ENCODE measurements at regions of chr22 and their contacts with region 1.

Region 1: GRCh38 chr22:37457093-37457893 is 28.9 kb downstream of the MFNG start:
- DNase-seq: peak; percentile 71 to 91 (median 82)
- H3K4me3 ChIP-seq: no peak overlapping the region
- H3K27ac ChIP-seq: no peak overlapping the region
- H3K4me1 ChIP-seq: peaks cover 0 to 9% of the 10 kb centered on the region in 2 donors
- H3K27me3 ChIP-seq: no peaks in the 10 kb centered on the region
- CTCF ChIP-seq: peak; percentile 83 to 95 (median 88)
- POLR2A ChIP-seq: no peak

Region 2: GRCh38 chr22:37260901-37261336 is 196.4 kb before region 1 on chr22:
- intact Hi-C with region 1: loop called in 1 of 2 experiments (anchors 5 kb)
- DNase-seq: peak; percentile 58 to 79 (median 68)
- H3K4me3 ChIP-seq: no peak overlapping the region
- H3K27ac ChIP-seq: no peak overlapping the region
- H3K4me1 ChIP-seq: no peaks in the 10 kb centered on the region
- H3K27me3 ChIP-seq: peaks cover 6% of the 10 kb centered on the region
- CTCF ChIP-seq: peak; percentile 75 to 91 (median 81)
- POLR2A ChIP-seq: no peak

Region 3: GRCh38 chr22:37273126-37273845 is 184.0 kb before region 1 on chr22:
- intact Hi-C with region 1: loop called in 1 of 2 experiments (anchors 5 kb)
- DNase-seq: no peak
- H3K4me3 ChIP-seq: no peak overlapping the region
- H3K27ac ChIP-seq: no peak overlapping the region
- H3K4me1 ChIP-seq: no peaks in the 10 kb centered on the region
- H3K27me3 ChIP-seq: no peaks in the 10 kb centered on the region
- CTCF ChIP-seq: no peak
- POLR2A ChIP-seq: no peak

Region 4: GRCh38 chr22:37316875-37317371 is 140.4 kb before region 1 on chr22:
- intact Hi-C with region 1: loop called (anchors 2 to 5 kb)
- DNase-seq: peak; percentile 81 to 90 (median 87)
- H3K4me3 ChIP-seq: no peak overlapping the region
- H3K27ac ChIP-seq: no peak overlapping the region
- H3K4me1 ChIP-seq: no peaks in the 10 kb centered on the region
- H3K27me3 ChIP-seq: no peaks in the 10 kb centered on the region
- CTCF ChIP-seq: peak; percentile 70 to 97 (median 92)
- POLR2A ChIP-seq: no peak